ENCODE measurements at regions of chr15 and their contacts with region 1.

Region 1: GRCh38 chr15:78108299-78109084 is 16.1 kb downstream of the SH2D7 start:
- DNase-seq: peak; percentile 82
- H3K4me3 ChIP-seq: no peak overlapping the region
- H3K27ac ChIP-seq: no peak overlapping the region
- H3K4me1 ChIP-seq: peaks cover 16% of the 10 kb centered on the region
- H3K27me3 ChIP-seq: no peaks in the 10 kb centered on the region
- CTCF ChIP-seq: peak; percentile 94 to 96
- POLR2A ChIP-seq: no peak

Region 2: GRCh38 chr15:77907824-77908751 is 200.4 kb before region 1 on chr15:
- CTCF ChIA-PET with region 1: interaction called, 9 read pairs
- POLR2A ChIA-PET with region 1: no interaction called
- dilution Hi-C with region 1: no loop called
- intact Hi-C with region 1: loop called (anchors 1 kb)
- DNase-seq: no peak
- H3K4me3 ChIP-seq: no peak overlapping the region
- H3K27ac ChIP-seq: no peak overlapping the region
- H3K4me1 ChIP-seq: no peaks in the 10 kb centered on the region
- H3K27me3 ChIP-seq: peaks cover 0 to 3% of the 10 kb centered on the region in 2 experiments
- CTCF ChIP-seq: peak; percentile 54 to 61
- POLR2A ChIP-seq: no peak

Region 3: DNA sequence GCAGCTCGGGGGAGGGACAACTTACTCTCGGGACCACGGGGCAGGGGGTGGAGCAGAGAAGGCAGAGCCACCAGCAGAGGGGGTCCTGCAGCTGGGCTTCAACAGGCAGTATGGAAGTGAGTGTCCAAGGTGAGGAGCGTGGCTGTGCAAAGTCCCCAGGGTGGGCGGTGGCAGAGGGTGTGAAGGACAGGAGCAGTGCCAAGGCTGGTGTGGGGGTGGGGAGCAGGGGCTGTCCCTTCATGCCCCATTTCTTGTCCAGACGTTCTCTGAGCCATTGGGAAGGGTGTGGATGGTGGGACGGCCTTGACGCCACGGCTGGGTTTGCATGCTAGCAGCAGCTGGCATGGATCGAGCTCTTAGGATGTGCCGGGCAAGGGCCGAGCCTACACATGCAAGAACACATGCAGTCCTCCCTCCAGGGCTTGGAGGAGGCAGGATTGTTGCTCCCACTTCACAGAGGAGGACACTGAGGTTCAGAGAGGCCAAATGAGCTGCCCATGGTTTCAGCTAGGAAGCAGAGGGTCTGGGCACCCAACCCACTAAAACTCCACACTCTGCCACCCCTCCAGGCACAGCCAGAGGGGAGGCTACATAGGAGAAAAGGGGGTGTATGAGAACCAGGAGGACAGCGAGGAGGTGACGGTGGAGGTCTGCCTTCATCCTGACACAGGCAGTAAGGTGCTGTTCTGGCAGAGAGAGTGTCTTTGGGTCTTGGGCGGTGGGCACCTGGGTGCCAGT is 124.6 kb before region 1 on chr15:
- CTCF ChIA-PET with region 1: interaction called, 11 read pairs
- POLR2A ChIA-PET with region 1: no interaction called
- dilution Hi-C with region 1: no loop called
- intact Hi-C with region 1: no loop called
- DNase-seq: no peak
- H3K4me3 ChIP-seq: no peak overlapping the region
- H3K27ac ChIP-seq: no peak overlapping the region
- H3K4me1 ChIP-seq: no peaks in the 10 kb centered on the region
- H3K27me3 ChIP-seq: peaks cover 0 to 1% of the 10 kb centered on the region in 2 experiments
- CTCF ChIP-seq: no peak
- POLR2A ChIP-seq: no peak

Region 4: DNA sequence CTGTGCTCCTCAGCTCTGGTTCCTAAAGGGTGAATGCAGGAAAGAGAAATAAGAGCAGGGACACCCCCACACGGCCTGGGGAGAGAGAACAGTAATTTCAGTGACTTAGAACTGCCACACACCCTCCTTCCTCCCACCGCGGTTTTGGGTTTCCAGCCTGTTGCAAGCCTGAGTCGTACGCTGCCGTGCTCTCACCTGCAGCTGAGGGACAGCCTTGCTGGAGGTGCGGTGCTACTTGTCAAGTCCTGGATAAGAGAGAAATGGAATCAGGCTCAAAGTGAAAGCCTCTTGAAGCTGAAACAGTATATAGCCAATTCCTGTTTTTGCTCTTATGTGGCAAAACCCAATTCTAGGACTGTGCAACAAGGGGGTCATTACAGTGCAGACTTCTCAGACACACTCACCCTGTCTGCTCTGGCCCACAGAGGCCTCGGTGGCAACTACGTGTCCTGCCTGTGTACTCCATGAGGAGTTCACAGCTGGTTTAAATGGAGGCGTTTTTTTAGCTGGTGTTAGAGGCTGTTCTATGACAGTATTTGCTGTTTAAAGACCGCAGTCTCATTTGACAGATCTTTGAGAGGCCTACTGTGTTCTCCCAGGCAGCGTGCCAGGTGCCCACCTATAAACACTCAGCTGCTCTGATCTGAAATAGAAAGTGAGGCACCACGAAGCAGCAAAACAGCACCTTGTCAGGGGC is 73.8 kb before region 1 on chr15:
- CTCF ChIA-PET with region 1: interaction called, 44 read pairs
- POLR2A ChIA-PET with region 1: no interaction called
- dilution Hi-C with region 1: no loop called
- intact Hi-C with region 1: loop called (anchors 1 kb)
- DNase-seq: peak; percentile 42
- H3K4me3 ChIP-seq: no peak overlapping the region
- H3K27ac ChIP-seq: peak overlapping the region; percentile 65
- H3K4me1 ChIP-seq: peaks cover 34% of the 10 kb centered on the region
- H3K27me3 ChIP-seq: no peaks in the 10 kb centered on the region
- CTCF ChIP-seq: no peak
- POLR2A ChIP-seq: no peak

Region 5: GRCh38 chr15:78077058-78077877 is 31.2 kb before region 1 on chr15 and contains the start of gene TBC1D2B:
- CTCF ChIA-PET with region 1: interaction called, 14 read pairs
- POLR2A ChIA-PET with region 1: no interaction called
- dilution Hi-C with region 1: no loop called
- intact Hi-C with region 1: loop called (anchors 2 kb)
- DNase-seq: peak; percentile 51
- H3K4me3 ChIP-seq: peak within 1 kb of the TSS; percentile 56 to 84 (median 63)
- H3K27ac ChIP-seq: peak within 1 kb of the TSS; percentile 87
- H3K4me1 ChIP-seq: peaks cover 17% of the 10 kb centered on the region
- H3K27me3 ChIP-seq: no peaks in the 10 kb centered on the region
- CTCF ChIP-seq: no peak
- POLR2A ChIP-seq: peak; percentile 59
- total RNA-seq, gene TBC1D2B: 45.4 and 46.1 TPM in 2 replicates

Region 6: GRCh38 chr15:78131295-78132061 is 23.0 kb after region 1 on chr15 and contains the start of gene CIB2:
- CTCF ChIA-PET with region 1: interaction called, 13 read pairs
- POLR2A ChIA-PET with region 1: no interaction called
- dilution Hi-C with region 1: no loop called
- intact Hi-C with region 1: loop called (anchors 1 kb)
- DNase-seq: peak; percentile 64
- H3K4me3 ChIP-seq: peak within 1 kb of the TSS; percentile 43 to 71 (median 68)
- H3K27ac ChIP-seq: no peak within 1 kb of the TSS
- H3K4me1 ChIP-seq: peaks cover 7% of the 10 kb centered on the region
- H3K27me3 ChIP-seq: no peaks in the 10 kb centered on the region
- CTCF ChIP-seq: peak; percentile 58 to 61
- POLR2A ChIP-seq: no peak
- total RNA-seq, gene CIB2: 2.5 and 4.0 TPM in 2 replicates

Region 7: DNA sequence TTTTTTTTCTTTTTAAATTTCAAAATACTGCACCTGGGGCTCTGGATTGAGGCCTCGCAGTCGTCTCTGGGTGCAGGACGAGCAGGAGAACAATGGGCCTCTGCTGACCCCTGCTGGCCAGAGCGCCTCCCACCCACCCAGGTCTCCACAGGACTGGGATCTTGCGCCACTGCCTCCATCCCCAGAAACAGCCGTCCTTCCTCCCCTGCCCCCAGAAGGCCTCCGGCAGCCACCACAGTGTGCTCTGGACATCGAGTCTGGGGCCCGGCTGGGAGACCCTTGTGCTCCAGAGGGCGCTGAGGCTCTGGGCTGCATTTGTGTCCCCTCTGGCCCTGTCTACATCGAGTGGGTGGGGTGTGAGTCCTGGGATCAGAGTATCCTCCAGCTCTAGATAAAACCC is 132.5 kb after region 1 on chr15:
- CTCF ChIA-PET with region 1: interaction called, 237 read pairs
- POLR2A ChIA-PET with region 1: interaction called, 4 read pairs
- dilution Hi-C with region 1: no loop called
- intact Hi-C with region 1: loop called (anchors 1 kb)
- DNase-seq: peak; percentile 65
- H3K4me3 ChIP-seq: no peak overlapping the region
- H3K27ac ChIP-seq: no peak overlapping the region
- H3K4me1 ChIP-seq: no peaks in the 10 kb centered on the region
- H3K27me3 ChIP-seq: peaks cover 0 to 4% of the 10 kb centered on the region in 2 experiments
- CTCF ChIP-seq: peak; percentile 78 to 92
- POLR2A ChIP-seq: no peak

Region 8: GRCh38 chr15:78429477-78429876 is 321.0 kb after region 1 on chr15:
- CTCF ChIA-PET with region 1: no interaction called
- POLR2A ChIA-PET with region 1: no interaction called
- dilution Hi-C with region 1: no loop called
- intact Hi-C with region 1: no loop called
- DNase-seq: no peak
- H3K4me3 ChIP-seq: no peak overlapping the region
- H3K27ac ChIP-seq: no peak overlapping the region
- H3K4me1 ChIP-seq: no peaks in the 10 kb centered on the region
- H3K27me3 ChIP-seq: peaks cover 22 to 35% of the 10 kb centered on the region in 2 experiments
- CTCF ChIP-seq: no peak
- POLR2A ChIP-seq: no peak